ENCODE measurements at regions of chr20 and their contacts with region 1.

Region 1: DNA sequence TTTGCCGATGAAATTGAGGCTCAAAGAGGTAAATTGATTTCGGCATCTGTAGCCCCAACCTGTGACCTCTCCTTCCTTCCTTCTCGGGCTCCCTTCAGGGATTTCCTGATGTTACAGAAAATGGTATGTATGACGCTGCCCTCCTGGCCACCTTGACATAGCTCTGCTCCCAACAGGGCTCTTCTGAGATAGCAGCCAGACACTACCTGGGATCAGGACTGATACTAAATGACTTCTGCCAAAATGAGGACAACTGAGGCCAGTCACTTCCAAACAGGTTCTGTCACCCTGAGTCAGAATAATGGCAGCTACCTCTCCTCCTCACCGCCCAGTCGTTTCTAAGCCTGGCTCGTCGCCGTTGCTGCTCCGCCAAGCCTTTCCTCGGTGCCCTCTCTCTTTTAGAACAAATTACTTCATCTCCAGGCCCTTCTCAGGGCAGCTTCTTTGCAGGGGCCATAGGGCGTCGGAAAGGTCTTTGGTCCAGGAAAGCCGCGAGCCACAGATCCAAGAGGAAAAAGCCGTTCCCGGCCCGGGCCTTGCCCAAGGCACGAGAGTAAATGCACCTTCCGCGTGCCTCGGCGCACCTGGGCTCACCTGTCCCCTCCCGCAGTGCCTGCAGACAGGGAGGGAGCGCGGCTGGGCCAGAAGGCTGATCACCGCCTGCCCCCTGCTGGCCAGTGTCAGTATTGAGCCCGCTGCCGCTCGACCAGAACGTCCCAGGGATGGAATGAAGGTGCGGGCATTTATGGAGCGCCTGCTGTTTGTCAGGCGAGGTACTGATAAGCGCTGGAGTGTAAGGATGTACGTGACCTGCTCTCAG is 904 bp upstream of the LPIN3 start:
- DNase-seq: peak; percentile 76 to 86 (median 81)
- H3K4me3 ChIP-seq: peak overlapping the region in 1 of 2 donors; percentile 24
- H3K4me3 Mint-ChIP-seq: peak overlapping the region; percentile 60 to 85 (median 78)
- H3K27ac ChIP-seq: no peak overlapping the region
- H3K27ac Mint-ChIP-seq: peak overlapping the region in 4 of 7 donors; percentile 18 to 62 (median 53)
- H3K4me1 ChIP-seq: peaks cover 10% of the 10 kb centered on the region
- H3K4me1 Mint-ChIP-seq: peaks cover 5 to 13% (median 8%) of the 10 kb centered on the region in 4 donors
- H3K27me3 ChIP-seq: no peaks in the 10 kb centered on the region
- H3K27me3 Mint-ChIP-seq: peaks cover 1 to 7% of the 10 kb centered on the region in 2 donors

Region 2: DNA sequence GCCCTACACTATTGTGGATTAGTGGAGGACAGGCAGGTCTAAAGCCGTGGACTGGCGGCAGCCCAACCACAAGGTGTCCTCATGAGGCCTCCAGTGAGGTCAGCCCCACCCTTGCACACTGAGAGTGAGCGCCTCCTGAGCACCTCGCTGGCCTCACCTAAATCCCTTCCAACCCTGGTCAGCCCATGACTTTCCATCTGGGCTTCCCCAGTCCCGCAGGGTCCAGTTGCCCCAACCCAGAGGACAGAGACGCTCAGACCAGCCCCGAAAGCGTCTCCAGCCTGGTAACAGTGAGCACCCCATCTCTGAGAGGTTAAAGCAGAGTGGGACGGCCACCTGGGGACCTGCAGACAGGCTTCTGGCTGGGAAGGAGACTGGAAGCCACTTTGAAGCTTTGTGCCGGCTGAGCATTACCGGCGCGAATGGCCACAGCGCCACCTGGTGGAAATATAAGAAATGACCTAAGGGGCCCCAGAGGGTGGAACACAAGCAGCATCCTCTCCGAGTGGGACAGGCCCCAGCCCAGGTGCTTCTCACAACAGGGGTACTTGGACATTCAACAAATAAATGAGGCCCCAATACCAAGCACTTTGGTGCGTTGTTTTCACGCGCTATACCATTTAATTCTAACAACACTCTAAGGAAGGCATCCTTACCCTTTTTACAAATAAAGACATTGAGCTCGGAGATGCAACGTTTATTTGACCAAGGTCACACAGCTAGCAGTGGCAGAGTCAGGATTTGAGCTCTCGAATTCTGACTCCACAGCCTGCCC is 376.8 kb before region 1 on chr20:
- CTCF ChIA-PET with region 1: interaction called, 42 read pairs
- POLR2A ChIA-PET with region 1: no interaction called
- intact Hi-C with region 1: loop called (anchors 1 kb)
- DNase-seq: peak; percentile 64 to 68 (median 65)
- H3K4me3 ChIP-seq: no peak overlapping the region
- H3K4me3 Mint-ChIP-seq: peak overlapping the region in 1 of 8 donors; percentile 4
- H3K27ac ChIP-seq: no peak overlapping the region
- H3K27ac Mint-ChIP-seq: no peak overlapping the region
- H3K4me1 ChIP-seq: peaks cover 16% of the 10 kb centered on the region
- H3K4me1 Mint-ChIP-seq: peaks cover 7 to 13% (median 8%) of the 10 kb centered on the region in 4 donors
- H3K27me3 ChIP-seq: no peaks in the 10 kb centered on the region
- H3K27me3 Mint-ChIP-seq: peaks cover 0 to 3% of the 10 kb centered on the region in 2 donors

Region 3: GRCh38 chr20:40970201-40970600 is 369.5 kb before region 1 on chr20:
- CTCF ChIA-PET with region 1: interaction called, 42 read pairs
- POLR2A ChIA-PET with region 1: no interaction called
- intact Hi-C with region 1: loop called (anchors 1 kb)
- DNase-seq: no peak
- H3K4me3 ChIP-seq: no peak overlapping the region
- H3K4me3 Mint-ChIP-seq: peak overlapping the region in 1 of 8 donors; percentile 5
- H3K27ac ChIP-seq: no peak overlapping the region
- H3K27ac Mint-ChIP-seq: peak overlapping the region in 1 of 7 donors; percentile 41
- H3K4me1 ChIP-seq: no peaks in the 10 kb centered on the region
- H3K4me1 Mint-ChIP-seq: peaks cover 6 to 10% (median 8%) of the 10 kb centered on the region in 4 donors
- H3K27me3 ChIP-seq: no peaks in the 10 kb centered on the region
- H3K27me3 Mint-ChIP-seq: no peaks in the 10 kb centered on the region

Region 4: GRCh38 chr20:41095110-41095969 is 244.4 kb before region 1 on chr20:
- CTCF ChIA-PET with region 1: interaction called, 4 read pairs
- POLR2A ChIA-PET with region 1: no interaction called
- intact Hi-C with region 1: loop called (anchors 1 kb)
- DNase-seq: peak in 4 of 5 donors; percentile 51 to 61 (median 54)
- H3K4me3 ChIP-seq: no peak overlapping the region
- H3K4me3 Mint-ChIP-seq: no peak overlapping the region
- H3K27ac ChIP-seq: no peak overlapping the region
- H3K27ac Mint-ChIP-seq: peak overlapping the region in 2 of 7 donors; percentile 46 to 72
- H3K4me1 ChIP-seq: no peaks in the 10 kb centered on the region
- H3K4me1 Mint-ChIP-seq: peaks cover 0 to 6% (median 0%) of the 10 kb centered on the region in 4 donors
- H3K27me3 ChIP-seq: no peaks in the 10 kb centered on the region
- H3K27me3 Mint-ChIP-seq: no peaks in the 10 kb centered on the region

Region 5: DNA sequence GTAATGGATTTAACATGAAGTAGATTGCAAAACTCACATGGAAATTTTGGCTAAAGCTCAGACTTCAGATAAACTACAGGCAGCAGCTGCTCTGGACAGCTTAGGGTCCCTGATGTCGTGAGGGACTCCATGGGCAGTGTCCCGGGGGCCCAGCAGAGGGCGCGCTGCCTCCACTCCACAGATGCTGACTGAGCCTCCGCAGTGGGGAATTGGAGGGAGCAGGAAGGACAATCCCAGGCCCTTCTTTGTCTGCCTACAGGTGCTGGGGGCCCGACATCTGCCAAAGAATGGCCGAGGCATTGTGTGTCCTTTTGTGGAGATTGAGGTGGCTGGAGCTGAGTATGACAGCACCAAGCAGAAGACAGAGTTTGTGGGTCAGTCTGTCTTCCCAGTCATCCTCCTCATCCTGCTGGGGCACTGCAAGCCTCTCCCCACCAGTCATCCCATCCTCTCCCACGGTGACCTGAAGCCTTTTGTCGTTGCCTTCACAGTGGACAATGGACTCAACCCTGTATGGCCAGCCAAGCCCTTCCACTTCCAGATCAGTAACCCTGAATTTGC is 166.5 kb before region 1 on chr20:
- CTCF ChIA-PET with region 1: interaction called, 43 read pairs
- POLR2A ChIA-PET with region 1: no interaction called
- intact Hi-C with region 1: loop called (anchors 1 kb)
- DNase-seq: peak; percentile 50 to 61 (median 54)
- H3K4me3 ChIP-seq: no peak overlapping the region
- H3K4me3 Mint-ChIP-seq: no peak overlapping the region
- H3K27ac ChIP-seq: no peak overlapping the region
- H3K27ac Mint-ChIP-seq: peak overlapping the region in 6 of 7 donors; percentile 8 to 82 (median 56)
- H3K4me1 ChIP-seq: no peaks in the 10 kb centered on the region
- H3K4me1 Mint-ChIP-seq: peaks cover 0 to 29% (median 13%) of the 10 kb centered on the region in 4 donors
- H3K27me3 ChIP-seq: no peaks in the 10 kb centered on the region
- H3K27me3 Mint-ChIP-seq: no peaks in the 10 kb centered on the region

Region 6: GRCh38 chr20:41317536-41318270 is 22.0 kb before region 1 on chr20 and contains the start of gene ZHX3:
- CTCF ChIA-PET with region 1: interaction called, 10 read pairs
- POLR2A ChIA-PET with region 1: no interaction called
- intact Hi-C with region 1: loop called (anchors 2 kb)
- DNase-seq: peak; percentile 91 to 97 (median 95)
- H3K4me3 ChIP-seq: peak within 1 kb of the TSS; percentile 21 to 74
- H3K4me3 Mint-ChIP-seq: peak within 1 kb of the TSS; percentile 85 to 90 (median 87)
- H3K27ac ChIP-seq: peak within 1 kb of the TSS; percentile 48
- H3K27ac Mint-ChIP-seq: peak within 1 kb of the TSS; percentile 79 to 90 (median 84)
- H3K4me1 ChIP-seq: peaks cover 16% of the 10 kb centered on the region
- H3K4me1 Mint-ChIP-seq: peaks cover 7 to 27% (median 18%) of the 10 kb centered on the region in 4 donors
- H3K27me3 ChIP-seq: no peaks in the 10 kb centered on the region
- H3K27me3 Mint-ChIP-seq: no peaks in the 10 kb centered on the region
- total RNA-seq, gene ZHX3: 5.2 to 6.3 TPM

Region 7: GRCh38 chr20:41329435-41330342 is 10.0 kb before region 1 on chr20:
- CTCF ChIA-PET with region 1: interaction called, 12 read pairs
- POLR2A ChIA-PET with region 1: no interaction called
- intact Hi-C with region 1: no loop called
- DNase-seq: peak; percentile 30 to 64 (median 39)
- H3K4me3 ChIP-seq: no peak overlapping the region
- H3K4me3 Mint-ChIP-seq: peak overlapping the region in 4 of 8 donors; percentile 4 to 55 (median 18)
- H3K27ac ChIP-seq: no peak overlapping the region
- H3K27ac Mint-ChIP-seq: peak overlapping the region in 6 of 7 donors; percentile 1 to 67 (median 32)
- H3K4me1 ChIP-seq: peaks cover 10% of the 10 kb centered on the region
- H3K4me1 Mint-ChIP-seq: peaks cover 7 to 16% (median 9%) of the 10 kb centered on the region in 4 donors
- H3K27me3 ChIP-seq: no peaks in the 10 kb centered on the region
- H3K27me3 Mint-ChIP-seq: peaks cover 0 to 3% of the 10 kb centered on the region in 2 donors

Region 8: GRCh38 chr20:41361757-41362747 is 22.3 kb after region 1 on chr20:
- CTCF ChIA-PET with region 1: no interaction called
- POLR2A ChIA-PET with region 1: no interaction called
- intact Hi-C with region 1: no loop called
- DNase-seq: no peak
- H3K4me3 ChIP-seq: no peak overlapping the region
- H3K4me3 Mint-ChIP-seq: no peak overlapping the region
- H3K27ac ChIP-seq: no peak overlapping the region
- H3K27ac Mint-ChIP-seq: no peak overlapping the region
- H3K4me1 ChIP-seq: no peaks in the 10 kb centered on the region
- H3K4me1 Mint-ChIP-seq: peaks cover 0 to 1% (median under 1%) of the 10 kb centered on the region in 4 donors
- H3K27me3 ChIP-seq: no peaks in the 10 kb centered on the region
- H3K27me3 Mint-ChIP-seq: peaks cover 4 to 8% of the 10 kb centered on the region in 2 donors